ENCODE measurements at regions of chrX and their contacts with region 1.

Region 1: GRCh38 chrX:33434256-33435092 is 223.1 kb upstream of the DMD start:
- DNase-seq: peak in 3 of 5 donors; percentile 13 to 30 (median 20)
- ATAC-seq: peak in 2 of 4 donors; percentile 56 to 57
- H3K4me3 ChIP-seq: peak overlapping the region in 2 of 12 donors; percentile 21 to 38
- H3K27ac ChIP-seq: no peak overlapping the region
- H3K4me1 ChIP-seq: no peaks in the 10 kb centered on the region
- H3K27me3 ChIP-seq: no peaks in the 10 kb centered on the region
- CTCF ChIP-seq: peak; percentile 52 to 91 (median 68)
- POLR2A ChIP-seq: no peak

Region 2: GRCh38 chrX:33987458-33987857 is 553.0 kb after region 1 on chrX:
- intact Hi-C with region 1: no loop called
- DNase-seq: peak in 1 of 5 donors; percentile 14
- ATAC-seq: no peak
- H3K4me3 ChIP-seq: no peak overlapping the region
- H3K27ac ChIP-seq: no peak overlapping the region
- H3K4me1 ChIP-seq: no peaks in the 10 kb centered on the region
- H3K27me3 ChIP-seq: no peaks in the 10 kb centered on the region
- CTCF ChIP-seq: no peak
- POLR2A ChIP-seq: no peak

Region 3: GRCh38 chrX:34300871-34301270 is 866.4 kb after region 1 on chrX:
- intact Hi-C with region 1: loop called in 8 of 10 experiments (anchors 2 to 10 kb)
- DNase-seq: peak in 1 of 5 donors; percentile 4
- ATAC-seq: no peak
- H3K4me3 ChIP-seq: no peak overlapping the region
- H3K27ac ChIP-seq: no peak overlapping the region
- H3K4me1 ChIP-seq: no peaks in the 10 kb centered on the region
- H3K27me3 ChIP-seq: no peaks in the 10 kb centered on the region
- CTCF ChIP-seq: peak; percentile 24 to 57 (median 44)
- POLR2A ChIP-seq: no peak

Measured in heart left ventricle (tissue), 16 donors.